CD4-positive, alpha-beta T cell (primary cell): ENCODE measurements at regions of chr13 and their contacts with region 1.

Region 1: GRCh38 chr13:19726611-19727010 is 56.1 kb downstream of the PSPC1 start:
- DNase-seq: no peak
- ATAC-seq: no peak
- H3K4me3 ChIP-seq: no peak overlapping the region
- H3K4me3 Mint-ChIP-seq: no peak overlapping the region
- H3K27ac ChIP-seq: no peak overlapping the region
- H3K27ac Mint-ChIP-seq: no peak overlapping the region
- H3K4me1 ChIP-seq: peaks cover 4% of the 10 kb centered on the region
- H3K4me1 Mint-ChIP-seq: peaks cover 38% of the 10 kb centered on the region
- H3K27me3 ChIP-seq: no peaks in the 10 kb centered on the region
- H3K27me3 Mint-ChIP-seq: no peaks in the 10 kb centered on the region
- CTCF ChIP-seq: no peak

Region 2: GRCh38 chr13:19681517-19681916 is 45.1 kb before region 1 on chr13:
- CTCF ChIA-PET with region 1: no interaction called
- POLR2A ChIA-PET with region 1: no interaction called
- intact Hi-C with region 1: loop called in 1 of 2 experiments (anchors 5 kb)
- DNase-seq: no peak
- ATAC-seq: peak; percentile 46
- H3K4me3 ChIP-seq: no peak overlapping the region
- H3K4me3 Mint-ChIP-seq: peak overlapping the region; percentile 40
- H3K27ac ChIP-seq: no peak overlapping the region
- H3K27ac Mint-ChIP-seq: peak overlapping the region; percentile 72
- H3K4me1 ChIP-seq: no peaks in the 10 kb centered on the region
- H3K4me1 Mint-ChIP-seq: peaks cover 45% of the 10 kb centered on the region
- H3K27me3 ChIP-seq: no peaks in the 10 kb centered on the region
- H3K27me3 Mint-ChIP-seq: no peaks in the 10 kb centered on the region
- CTCF ChIP-seq: no peak

Region 3: GRCh38 chr13:19959831-19960652 is 233.4 kb after region 1 on chr13:
- CTCF ChIA-PET with region 1: no interaction called
- POLR2A ChIA-PET with region 1: no interaction called
- intact Hi-C with region 1: no loop called
- DNase-seq: peak; percentile 75 to 96 (median 81)
- ATAC-seq: peak; percentile 55
- H3K4me3 ChIP-seq: peak overlapping the region; percentile 81
- H3K4me3 Mint-ChIP-seq: peak overlapping the region; percentile 98
- H3K27ac ChIP-seq: peak overlapping the region; percentile 81 to 93
- H3K27ac Mint-ChIP-seq: peak overlapping the region; percentile 99
- H3K4me1 ChIP-seq: peaks cover 30% of the 10 kb centered on the region
- H3K4me1 Mint-ChIP-seq: peaks cover 28% of the 10 kb centered on the region
- H3K27me3 ChIP-seq: no peaks in the 10 kb centered on the region
- H3K27me3 Mint-ChIP-seq: no peaks in the 10 kb centered on the region
- CTCF ChIP-seq: peak; percentile 87

Region 4: DNA sequence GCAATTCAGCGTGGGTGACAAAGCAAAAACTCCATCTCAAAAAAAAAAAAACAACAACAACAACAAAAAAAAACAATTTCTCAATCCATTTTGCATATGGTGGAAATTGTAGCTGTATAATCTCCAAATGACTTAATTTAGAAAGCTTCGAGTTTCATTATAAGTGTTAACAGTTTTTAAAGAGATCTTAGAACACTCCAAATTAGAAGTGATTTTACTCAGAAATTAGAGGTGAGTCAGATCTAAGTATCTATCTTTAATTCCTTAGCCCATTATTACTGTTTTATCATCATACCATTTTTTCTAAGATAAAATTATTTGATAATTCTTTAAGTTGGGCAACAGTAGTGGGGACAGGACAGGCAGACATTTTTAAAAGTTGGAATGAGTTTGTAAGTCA is 292.4 kb after region 1 on chr13:
- CTCF ChIA-PET with region 1: no interaction called
- POLR2A ChIA-PET with region 1: no interaction called
- intact Hi-C with region 1: no loop called
- DNase-seq: no peak
- ATAC-seq: no peak
- H3K4me3 ChIP-seq: no peak overlapping the region
- H3K4me3 Mint-ChIP-seq: no peak overlapping the region
- H3K27ac ChIP-seq: no peak overlapping the region
- H3K27ac Mint-ChIP-seq: no peak overlapping the region
- H3K4me1 ChIP-seq: no peaks in the 10 kb centered on the region
- H3K4me1 Mint-ChIP-seq: peaks cover 40% of the 10 kb centered on the region
- H3K27me3 ChIP-seq: no peaks in the 10 kb centered on the region
- H3K27me3 Mint-ChIP-seq: no peaks in the 10 kb centered on the region
- CTCF ChIP-seq: no peak

Region 5: GRCh38 chr13:20387441-20387971 is 660.9 kb after region 1 on chr13:
- CTCF ChIA-PET with region 1: no interaction called
- POLR2A ChIA-PET with region 1: no interaction called
- intact Hi-C with region 1: no loop called
- DNase-seq: no peak
- ATAC-seq: no peak
- H3K4me3 ChIP-seq: no peak overlapping the region
- H3K4me3 Mint-ChIP-seq: no peak overlapping the region
- H3K27ac ChIP-seq: no peak overlapping the region
- H3K27ac Mint-ChIP-seq: no peak overlapping the region
- H3K4me1 ChIP-seq: no peaks in the 10 kb centered on the region
- H3K4me1 Mint-ChIP-seq: peaks cover 9% of the 10 kb centered on the region
- H3K27me3 ChIP-seq: no peaks in the 10 kb centered on the region
- H3K27me3 Mint-ChIP-seq: no peaks in the 10 kb centered on the region
- CTCF ChIP-seq: no peak

Region 6: DNA sequence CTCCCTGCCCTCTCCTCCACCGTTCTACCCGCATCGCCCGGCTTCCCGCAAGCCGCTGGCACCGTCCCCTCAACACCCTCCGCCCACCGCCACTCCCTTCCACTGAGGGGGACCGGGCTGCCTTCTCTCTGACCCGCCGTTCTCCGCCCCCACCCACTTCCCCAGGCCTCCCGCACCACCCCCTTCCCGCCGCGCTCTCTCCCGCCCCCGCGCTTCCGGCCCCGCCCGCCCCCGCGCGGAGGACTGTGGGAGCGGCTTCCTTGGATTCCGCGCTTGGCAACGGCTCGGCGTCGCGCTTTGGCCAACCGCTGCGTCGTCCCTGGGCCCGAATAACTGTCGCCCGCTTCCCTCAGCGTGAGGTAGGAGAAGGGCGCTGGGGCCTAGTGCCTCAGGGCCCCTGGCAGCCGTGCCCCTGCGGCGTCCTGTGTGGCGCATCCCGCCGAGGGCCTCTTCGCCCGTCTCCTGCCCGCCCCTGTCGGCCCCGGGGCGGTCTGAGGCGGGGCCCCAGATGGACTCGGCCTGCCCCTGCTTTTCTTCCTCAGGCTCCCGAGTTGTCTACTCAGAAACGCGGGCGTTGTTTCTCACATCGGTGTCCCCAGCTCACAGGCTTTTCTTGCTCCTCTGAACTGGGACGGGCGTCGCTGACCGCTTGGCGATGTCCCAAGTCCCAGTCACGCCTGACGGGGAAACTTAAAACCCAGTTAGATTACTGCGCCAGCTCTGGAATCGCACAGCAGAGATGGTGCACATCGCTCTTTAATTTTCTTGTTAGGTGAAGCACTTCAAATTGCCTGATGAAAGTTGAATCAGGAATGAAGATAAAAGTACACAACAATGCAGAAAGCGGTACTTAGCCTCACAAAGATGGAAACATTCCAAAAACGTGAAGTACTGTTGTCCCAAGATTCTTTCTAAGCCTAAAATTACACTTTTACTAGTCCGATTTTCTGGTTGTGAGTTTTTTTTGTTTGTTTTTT is 840.6 kb after region 1 on chr13 and contains the start of gene IFT88:
- CTCF ChIA-PET with region 1: no interaction called
- POLR2A ChIA-PET with region 1: no interaction called
- intact Hi-C with region 1: no loop called
- DNase-seq: peak; percentile 57 to 87 (median 78)
- ATAC-seq: peak; percentile 87
- H3K4me3 ChIP-seq: peak within 1 kb of the TSS; percentile 69
- H3K4me3 Mint-ChIP-seq: peak within 1 kb of the TSS; percentile 96
- H3K27ac ChIP-seq: peak within 1 kb of the TSS; percentile 53 to 60
- H3K27ac Mint-ChIP-seq: peak within 1 kb of the TSS; percentile 82
- H3K4me1 ChIP-seq: peaks cover 15% of the 10 kb centered on the region
- H3K4me1 Mint-ChIP-seq: peaks cover 19% of the 10 kb centered on the region
- H3K27me3 ChIP-seq: no peaks in the 10 kb centered on the region
- H3K27me3 Mint-ChIP-seq: no peaks in the 10 kb centered on the region
- CTCF ChIP-seq: no peak
- total RNA-seq, gene IFT88: 9.0 to 9.5 TPM